ENCODE measurements at regions of chrX and their contacts with region 1.

Region 1: GRCh38 chrX:149470955-149471354 is 34.2 kb downstream of the IDS start:
- DNase-seq: peak; percentile 34 to 87
- H3K4me3 ChIP-seq: no peak overlapping the region
- H3K27ac ChIP-seq: no peak overlapping the region
- H3K4me1 ChIP-seq: no peaks in the 10 kb centered on the region
- H3K27me3 ChIP-seq: no peaks in the 10 kb centered on the region
- CTCF ChIP-seq: peak; percentile 74 to 88 (median 78)
- EP300 ChIP-seq: no peak
- POLR2A ChIP-seq: no peak
- RAD21 ChIP-seq: peak; percentile 93 to 98

Region 2: GRCh38 chrX:149003863-149004660 is 466.9 kb before region 1 on chrX:
- CTCF ChIA-PET with region 1: interaction called, 10 read pairs
- POLR2A ChIA-PET with region 1: no interaction called
- DNase-seq: no peak
- H3K4me3 ChIP-seq: no peak overlapping the region
- H3K27ac ChIP-seq: no peak overlapping the region
- H3K4me1 ChIP-seq: no peaks in the 10 kb centered on the region
- H3K27me3 ChIP-seq: no peaks in the 10 kb centered on the region
- CTCF ChIP-seq: no peak
- EP300 ChIP-seq: no peak
- POLR2A ChIP-seq: no peak
- RAD21 ChIP-seq: no peak

Region 3: GRCh38 chrX:149306445-149306844 is 164.5 kb before region 1 on chrX:
- CTCF ChIA-PET with region 1: interaction called, 26 read pairs
- POLR2A ChIA-PET with region 1: no interaction called
- DNase-seq: no peak
- H3K4me3 ChIP-seq: no peak overlapping the region
- H3K27ac ChIP-seq: no peak overlapping the region
- H3K4me1 ChIP-seq: no peaks in the 10 kb centered on the region
- H3K27me3 ChIP-seq: no peaks in the 10 kb centered on the region
- CTCF ChIP-seq: peak in 2 of 3 experiments; percentile 10 to 16; a peak in 2 of 4 replicates
- EP300 ChIP-seq: no peak
- POLR2A ChIP-seq: no peak
- RAD21 ChIP-seq: peak; percentile 19 to 49; a peak in 2 of 4 replicates

Region 4: DNA sequence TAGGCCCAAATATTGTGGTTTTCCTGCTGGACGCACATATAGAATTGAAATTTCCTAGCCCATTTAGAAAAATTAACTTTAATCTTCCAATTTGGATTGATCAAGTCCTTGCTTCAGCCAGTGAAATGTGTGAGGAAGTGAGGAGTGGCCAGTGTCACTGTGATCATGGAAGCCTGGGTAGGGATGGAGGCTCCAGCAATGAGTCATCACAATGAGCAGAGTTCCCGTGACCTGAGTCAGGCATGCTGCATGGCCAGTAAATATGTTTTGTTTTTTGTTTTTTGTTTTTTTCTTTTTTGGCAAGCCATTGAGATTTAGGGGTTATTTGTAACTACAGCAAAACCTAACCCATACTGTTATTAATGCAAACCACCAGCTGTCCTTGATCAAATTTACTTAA is 17.9 kb before region 1 on chrX:
- CTCF ChIA-PET with region 1: no interaction called
- POLR2A ChIA-PET with region 1: no interaction called
- DNase-seq: no peak
- H3K4me3 ChIP-seq: no peak overlapping the region
- H3K27ac ChIP-seq: no peak overlapping the region
- H3K4me1 ChIP-seq: no peaks in the 10 kb centered on the region
- H3K27me3 ChIP-seq: no peaks in the 10 kb centered on the region
- CTCF ChIP-seq: no peak
- EP300 ChIP-seq: no peak
- POLR2A ChIP-seq: no peak
- RAD21 ChIP-seq: no peak

Region 5: GRCh38 chrX:149539283-149540130 is 68.6 kb after region 1 on chrX:
- CTCF ChIA-PET with region 1: no interaction called
- POLR2A ChIA-PET with region 1: no interaction called
- DNase-seq: peak; percentile 79 to 84
- H3K4me3 ChIP-seq: peak overlapping the region; percentile 56 to 71 (median 58)
- H3K27ac ChIP-seq: no peak overlapping the region; the same call in 1 of the 2 replicates
- H3K4me1 ChIP-seq: peaks cover 0 to 5% (median 4%) of the 10 kb centered on the region in 4 experiments; a peak in 3 of 7 replicates
- H3K27me3 ChIP-seq: no peaks in the 10 kb centered on the region; a peak in 1 of 7 replicates
- CTCF ChIP-seq: no peak
- EP300 ChIP-seq: no peak
- POLR2A ChIP-seq: no peak
- RAD21 ChIP-seq: no peak

Measured in H1 (cell line).